Calu3 (cell line): ENCODE measurements at regions of chr10 and their contacts with region 1.

Region 1: DNA sequence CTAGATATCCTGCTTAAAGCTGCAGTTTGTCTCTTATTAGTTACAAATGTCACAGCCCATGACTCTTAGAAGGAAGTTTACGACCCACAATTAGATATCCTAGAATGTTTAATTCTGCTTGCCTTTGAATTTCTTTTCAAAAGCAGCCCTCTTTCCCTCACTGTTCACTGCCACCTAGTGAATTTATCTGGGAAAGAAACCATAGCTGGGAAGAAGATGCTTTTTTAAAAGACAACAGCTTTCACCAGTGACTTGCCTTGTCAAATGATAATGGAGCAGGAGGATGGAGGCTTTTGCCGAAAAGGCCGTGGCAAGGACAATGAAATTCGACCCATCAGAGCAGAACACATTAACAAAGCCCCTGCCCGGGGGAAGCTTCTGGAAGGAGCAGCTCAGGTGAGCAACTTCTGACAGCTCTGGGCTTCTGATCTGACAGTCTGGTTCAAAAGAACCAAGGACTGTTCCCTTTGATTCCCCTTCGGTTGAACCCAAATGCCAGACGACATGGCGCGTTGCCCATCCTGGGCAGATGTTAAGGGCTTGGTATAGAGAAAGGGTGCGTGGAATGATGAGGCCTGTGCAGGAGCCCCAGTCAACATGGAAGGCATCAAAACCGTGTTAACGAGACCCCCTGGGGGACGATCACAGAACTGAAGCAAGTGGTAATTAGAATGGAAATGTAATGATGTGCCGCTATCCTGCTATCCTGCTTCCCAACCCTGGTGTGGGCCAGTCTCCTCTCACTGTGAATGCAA is 236.8 kb downstream of the FRMD4A start:
- DNase-seq: peak; percentile 14
- H3K4me3 Mint-ChIP-seq: no peak overlapping the region
- H3K27ac Mint-ChIP-seq: no peak overlapping the region
- H3K4me1 Mint-ChIP-seq: no peaks in the 10 kb centered on the region
- H3K27me3 Mint-ChIP-seq: no peaks in the 10 kb centered on the region
- CTCF ChIP-seq: no peak

Region 2: GRCh38 chr10:13787015-13787421 is 306.9 kb before region 1 on chr10:
- CTCF ChIA-PET with region 1: interaction called, 8 read pairs
- intact Hi-C with region 1: loop called (anchors 1 kb)
- DNase-seq: no peak
- H3K4me3 Mint-ChIP-seq: no peak overlapping the region
- H3K27ac Mint-ChIP-seq: no peak overlapping the region
- H3K4me1 Mint-ChIP-seq: no peaks in the 10 kb centered on the region
- H3K27me3 Mint-ChIP-seq: no peaks in the 10 kb centered on the region
- CTCF ChIP-seq: no peak

Region 3: DNA sequence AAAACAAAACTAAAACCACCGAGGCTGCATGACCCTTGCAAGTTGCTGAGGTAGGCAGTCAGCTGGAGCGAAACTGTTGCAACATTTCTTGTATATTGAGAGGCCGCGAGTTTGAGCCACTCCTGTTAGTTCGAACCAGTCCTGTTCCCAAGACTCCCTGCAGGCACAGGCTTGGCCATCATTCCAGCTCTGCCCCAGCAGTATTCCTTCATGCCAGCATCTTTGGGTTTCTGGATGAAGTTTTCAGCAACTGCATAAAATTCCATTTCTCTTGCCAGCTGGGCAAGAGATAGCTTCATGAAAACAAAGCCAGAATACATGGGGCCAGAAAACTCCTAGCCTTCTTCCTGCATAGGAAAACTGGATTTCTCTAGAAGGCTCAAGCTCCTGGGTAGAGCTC is 29.2 kb after region 1 on chr10:
- CTCF ChIA-PET with region 1: no interaction called
- intact Hi-C with region 1: loop called (anchors 1 kb)
- DNase-seq: no peak
- H3K4me3 Mint-ChIP-seq: no peak overlapping the region
- H3K27ac Mint-ChIP-seq: no peak overlapping the region
- H3K4me1 Mint-ChIP-seq: peaks cover 9% of the 10 kb centered on the region
- H3K27me3 Mint-ChIP-seq: peaks cover 25% of the 10 kb centered on the region
- CTCF ChIP-seq: no peak